Gastrocnemius medialis (tissue), 4 donors: ENCODE measurements at regions of chr10 and their contacts with region 1.

Region 1: DNA sequence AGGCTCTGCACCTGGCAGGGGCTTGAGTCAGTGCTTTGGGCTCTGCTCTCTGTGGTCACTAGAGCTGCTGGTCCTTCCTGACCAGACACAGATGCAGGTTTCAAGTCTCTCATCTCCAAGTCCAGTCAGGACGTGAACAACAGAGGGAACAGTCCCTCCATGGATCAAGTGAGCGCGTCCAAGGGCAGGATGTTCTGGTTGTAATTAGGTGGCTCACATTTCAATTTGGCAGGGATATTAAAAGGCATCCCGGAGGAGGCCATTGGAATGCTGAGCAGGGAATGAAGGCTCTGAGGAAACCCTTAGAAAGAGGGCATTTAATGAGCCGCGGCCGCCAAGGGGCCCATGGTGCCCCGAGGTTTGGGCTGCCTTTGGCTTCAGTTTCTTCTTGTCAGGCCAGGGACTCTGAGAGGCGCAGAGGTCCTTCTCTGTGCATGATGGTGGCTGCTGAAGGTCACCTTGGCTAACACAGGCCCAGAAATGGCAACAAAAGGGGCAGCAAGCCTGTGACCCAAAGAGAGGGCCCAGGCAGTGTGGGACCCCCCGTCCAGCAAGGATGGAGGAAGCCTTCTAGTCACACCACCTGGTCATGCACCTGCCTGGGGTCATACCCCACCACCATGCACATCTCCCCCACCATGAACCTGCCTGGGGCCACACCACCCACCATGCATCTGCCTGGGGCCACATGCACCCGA is 30.7 kb upstream of the INPP5A start:
- DNase-seq: peak; percentile 79 to 82
- ATAC-seq: peak; percentile 86 to 93
- H3K4me3 ChIP-seq: no peak overlapping the region
- H3K27ac ChIP-seq: peak overlapping the region; percentile 72 to 82 (median 80)
- H3K4me1 ChIP-seq: peaks cover 25 to 33% of the 10 kb centered on the region in 2 donors
- H3K27me3 ChIP-seq: no peaks in the 10 kb centered on the region
- CTCF ChIP-seq: no peak
- POLR2A ChIP-seq: no peak

Region 2: DNA sequence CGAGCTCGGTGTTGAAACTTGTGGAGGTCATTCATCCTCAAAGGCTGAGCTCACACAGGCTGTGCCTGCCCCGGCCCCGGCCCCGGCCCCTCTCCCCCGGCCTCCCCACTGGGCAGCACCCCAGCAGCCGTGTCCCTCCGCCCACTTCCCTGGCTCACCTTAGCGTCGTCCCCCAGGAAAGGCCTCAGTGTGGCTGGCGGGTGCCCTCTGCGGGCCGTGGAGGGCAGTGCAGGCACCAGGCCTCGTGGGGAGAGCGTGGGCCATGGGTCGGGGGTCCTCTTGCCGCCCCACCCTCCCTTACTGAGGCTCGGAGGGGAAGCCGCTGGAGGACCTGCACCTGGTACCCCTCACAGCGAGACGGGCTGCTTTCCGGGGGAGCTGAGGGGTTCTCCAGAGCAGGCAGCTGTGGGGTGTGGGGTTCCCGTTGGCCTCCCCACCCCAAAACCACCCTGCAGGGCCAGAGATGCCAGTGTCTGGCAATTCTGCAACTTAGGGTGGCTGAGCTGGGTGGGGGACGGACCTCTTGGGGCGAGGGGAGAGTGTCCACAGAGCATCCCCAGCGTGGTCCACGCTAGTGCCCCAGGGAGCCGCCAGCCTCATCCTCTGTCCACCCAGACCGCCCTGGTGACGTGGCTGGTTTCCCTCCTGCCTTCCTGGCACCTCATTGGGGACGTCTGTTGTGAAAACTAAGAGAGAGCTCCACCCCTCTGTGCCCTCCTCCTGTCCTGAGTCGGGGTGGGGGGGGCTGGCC is 364.3 kb before region 1 on chr10:
- in situ Hi-C with region 1: no loop called
- intact Hi-C with region 1: no loop called
- DNase-seq: no peak
- ATAC-seq: peak; percentile 66 to 74
- H3K4me3 ChIP-seq: no peak overlapping the region
- H3K27ac ChIP-seq: no peak overlapping the region
- H3K4me1 ChIP-seq: no peaks in the 10 kb centered on the region
- H3K27me3 ChIP-seq: no peaks in the 10 kb centered on the region
- CTCF ChIP-seq: peak; percentile 49 to 91 (median 83)
- POLR2A ChIP-seq: no peak

Region 3: DNA sequence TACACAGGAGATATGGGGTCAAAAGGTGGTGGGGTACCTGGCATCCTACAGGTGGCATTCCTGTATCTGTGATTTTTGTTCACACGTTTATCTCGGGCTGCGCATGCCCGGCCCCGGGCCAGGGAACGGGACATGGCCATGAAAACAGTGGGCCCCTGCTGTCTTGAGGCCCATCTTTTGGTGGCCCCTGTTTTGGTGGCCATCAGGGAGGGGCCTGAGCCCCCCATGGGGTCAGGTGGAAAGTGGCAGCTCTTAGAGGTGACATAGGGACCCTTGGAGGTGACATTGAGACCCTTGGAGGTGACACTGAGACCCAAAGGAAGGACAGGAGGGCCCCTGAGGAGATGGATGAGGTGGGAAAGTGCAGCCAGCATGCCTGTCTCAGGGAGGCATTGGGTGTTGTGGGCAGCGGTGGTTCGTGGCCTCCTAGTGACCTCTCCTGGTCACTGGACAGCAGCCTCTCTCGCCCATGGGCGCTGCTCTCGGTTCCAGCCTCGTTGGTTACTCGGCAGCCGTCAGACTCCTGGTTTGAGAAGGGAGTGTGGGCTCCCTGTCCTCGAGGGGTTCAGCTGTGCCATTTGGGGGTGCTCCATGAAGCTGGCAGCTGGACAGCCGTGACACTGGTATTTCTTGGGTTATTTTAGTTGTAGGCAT is 70.6 kb after region 1 on chr10:
- in situ Hi-C with region 1: no loop called
- intact Hi-C with region 1: loop called (anchors 2 kb)
- DNase-seq: peak; percentile 49 to 65
- ATAC-seq: peak; percentile 68 to 90
- H3K4me3 ChIP-seq: no peak overlapping the region
- H3K27ac ChIP-seq: no peak overlapping the region
- H3K4me1 ChIP-seq: peaks cover 31 to 43% of the 10 kb centered on the region in 2 donors
- H3K27me3 ChIP-seq: no peaks in the 10 kb centered on the region
- CTCF ChIP-seq: peak; percentile 52 to 72 (median 60)
- POLR2A ChIP-seq: no peak

Region 4: DNA sequence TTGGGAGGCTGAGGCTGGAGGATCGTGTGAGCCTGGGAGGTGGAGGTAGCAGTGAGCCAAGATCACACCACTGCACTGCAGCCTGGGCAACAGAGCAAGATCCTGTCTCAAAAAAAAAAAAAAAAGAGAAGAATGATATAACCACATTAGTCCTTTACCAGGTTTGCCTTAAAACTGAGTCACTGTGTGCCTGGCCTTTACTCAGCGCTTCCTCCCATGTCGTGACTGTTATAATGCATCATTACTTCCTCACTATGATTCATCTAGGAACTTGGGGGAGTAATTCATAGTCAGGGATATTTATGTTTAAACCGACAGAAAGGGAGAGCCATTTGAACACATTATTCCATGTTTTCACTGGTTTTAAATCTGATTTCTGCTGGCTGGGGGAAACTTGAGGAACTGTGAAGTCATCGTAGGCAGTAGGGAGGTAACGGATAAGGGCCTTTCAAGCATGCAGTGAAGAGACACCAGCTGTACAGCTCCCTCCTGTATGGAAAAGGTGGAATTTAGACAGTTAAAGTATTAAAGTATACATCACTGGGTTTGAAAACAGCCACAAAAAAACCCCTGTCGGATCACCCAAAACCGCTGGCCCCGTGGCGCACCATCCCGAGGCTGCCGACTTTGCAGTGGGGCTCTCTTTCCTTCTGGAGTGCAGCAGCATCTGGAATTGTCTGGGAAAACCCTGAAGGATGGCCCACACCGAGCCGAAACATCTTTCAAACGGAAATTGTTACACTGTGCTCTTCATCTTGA is 159.3 kb after region 1 on chr10:
- in situ Hi-C with region 1: no loop called
- intact Hi-C with region 1: no loop called
- DNase-seq: no peak
- ATAC-seq: no peak
- H3K4me3 ChIP-seq: no peak overlapping the region
- H3K27ac ChIP-seq: no peak overlapping the region
- H3K4me1 ChIP-seq: no peaks in the 10 kb centered on the region
- H3K27me3 ChIP-seq: no peaks in the 10 kb centered on the region
- CTCF ChIP-seq: no peak
- POLR2A ChIP-seq: no peak